B cell (primary cell): ENCODE measurements at regions of chr5 and their contacts with region 1.

Region 1: GRCh38 chr5:17216176-17216973 is 1.1 kb upstream of the BASP1 start:
- DNase-seq: peak; percentile 92
- ATAC-seq: peak; percentile 42
- H3K4me3 ChIP-seq: peak overlapping the region; percentile 55 to 87 (median 75)
- H3K4me3 Mint-ChIP-seq: peak overlapping the region; percentile 92
- H3K27ac ChIP-seq: peak overlapping the region; percentile 59 to 78
- H3K27ac Mint-ChIP-seq: peak overlapping the region; percentile 96
- H3K4me1 ChIP-seq: peaks cover 26 to 31% of the 10 kb centered on the region in 2 donors
- H3K4me1 Mint-ChIP-seq: peaks cover 41% of the 10 kb centered on the region
- H3K27me3 ChIP-seq: no peaks in the 10 kb centered on the region
- H3K27me3 Mint-ChIP-seq: no peaks in the 10 kb centered on the region
- CTCF ChIP-seq: peak; percentile 91

Region 2: DNA sequence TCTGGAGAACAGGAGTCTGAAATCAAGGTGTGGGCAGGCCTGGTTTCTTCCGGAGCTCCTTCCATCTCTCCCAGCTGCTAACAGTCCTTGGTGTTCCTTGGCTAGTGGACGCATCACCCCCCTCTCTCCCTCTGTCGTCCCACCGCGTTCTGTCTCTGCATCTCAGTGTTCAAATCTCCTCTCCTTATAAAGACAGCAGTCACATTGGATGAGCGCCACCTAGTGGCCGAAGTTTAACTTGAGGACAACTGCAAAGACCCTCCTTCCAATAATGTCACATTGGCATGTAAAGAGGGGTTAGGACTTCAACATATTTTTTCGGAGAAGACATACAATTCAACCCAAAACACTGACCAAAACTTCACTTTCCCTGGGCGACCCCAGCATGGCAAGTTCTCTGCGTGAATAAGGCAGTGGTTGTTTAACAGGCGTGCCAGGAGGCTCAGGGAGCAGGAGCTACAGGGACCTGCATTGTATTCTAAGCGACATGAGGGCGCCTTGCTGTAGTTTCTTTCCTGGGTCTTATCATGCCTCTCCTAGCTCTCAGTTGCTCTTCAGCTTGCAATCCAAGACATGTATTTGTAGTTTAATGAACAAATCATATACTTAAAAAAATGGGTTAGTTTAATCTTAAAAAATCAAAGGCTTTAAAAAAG is 26.9 kb before region 1 on chr5:
- CTCF ChIA-PET with region 1: interaction called, 20 read pairs
- POLR2A ChIA-PET with region 1: no interaction called
- intact Hi-C with region 1: no loop called
- DNase-seq: peak; percentile 74
- ATAC-seq: no peak
- H3K4me3 ChIP-seq: no peak overlapping the region
- H3K4me3 Mint-ChIP-seq: no peak overlapping the region
- H3K27ac ChIP-seq: no peak overlapping the region
- H3K27ac Mint-ChIP-seq: no peak overlapping the region
- H3K4me1 ChIP-seq: no peaks in the 10 kb centered on the region
- H3K4me1 Mint-ChIP-seq: peaks cover 4% of the 10 kb centered on the region
- H3K27me3 ChIP-seq: no peaks in the 10 kb centered on the region
- H3K27me3 Mint-ChIP-seq: peaks cover 6% of the 10 kb centered on the region
- CTCF ChIP-seq: peak; percentile 87

Region 3: DNA sequence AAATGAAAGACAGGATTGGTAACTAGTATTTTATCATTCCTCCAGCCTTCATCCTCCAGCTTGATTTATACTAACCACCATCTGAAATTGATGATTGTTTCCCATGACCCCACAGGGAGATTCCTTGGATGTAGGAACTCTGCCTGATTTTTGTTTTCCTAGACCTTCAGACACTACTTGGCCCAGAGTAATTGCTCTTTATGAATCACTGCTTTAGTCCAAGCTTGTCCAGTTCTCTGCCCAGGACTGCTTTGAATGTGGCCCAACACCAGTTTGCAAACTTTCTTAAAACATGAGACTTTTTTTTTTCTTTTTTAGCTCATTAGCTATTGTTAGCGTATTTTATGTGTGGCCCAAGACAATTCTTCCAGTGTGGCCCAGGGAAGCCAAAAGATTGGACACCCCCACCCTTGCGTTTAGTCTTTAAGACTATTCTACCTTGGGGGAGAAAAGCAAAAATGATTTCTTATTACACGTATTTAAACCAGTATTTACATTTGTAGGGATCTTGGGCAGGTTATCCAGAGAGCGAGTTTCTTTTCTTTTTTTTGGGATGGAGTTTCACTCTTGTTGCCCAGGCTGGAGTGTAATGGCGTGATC is 19.5 kb after region 1 on chr5:
- CTCF ChIA-PET with region 1: interaction called, 17 read pairs
- POLR2A ChIA-PET with region 1: interaction called, 3 read pairs
- intact Hi-C with region 1: no loop called
- DNase-seq: no peak
- ATAC-seq: no peak
- H3K4me3 ChIP-seq: no peak overlapping the region
- H3K4me3 Mint-ChIP-seq: no peak overlapping the region
- H3K27ac ChIP-seq: no peak overlapping the region
- H3K27ac Mint-ChIP-seq: peak overlapping the region; percentile 1
- H3K4me1 ChIP-seq: peaks cover 28 to 30% of the 10 kb centered on the region in 2 donors
- H3K4me1 Mint-ChIP-seq: peaks cover 73% of the 10 kb centered on the region
- H3K27me3 ChIP-seq: no peaks in the 10 kb centered on the region
- H3K27me3 Mint-ChIP-seq: no peaks in the 10 kb centered on the region
- CTCF ChIP-seq: no peak

Region 4: DNA sequence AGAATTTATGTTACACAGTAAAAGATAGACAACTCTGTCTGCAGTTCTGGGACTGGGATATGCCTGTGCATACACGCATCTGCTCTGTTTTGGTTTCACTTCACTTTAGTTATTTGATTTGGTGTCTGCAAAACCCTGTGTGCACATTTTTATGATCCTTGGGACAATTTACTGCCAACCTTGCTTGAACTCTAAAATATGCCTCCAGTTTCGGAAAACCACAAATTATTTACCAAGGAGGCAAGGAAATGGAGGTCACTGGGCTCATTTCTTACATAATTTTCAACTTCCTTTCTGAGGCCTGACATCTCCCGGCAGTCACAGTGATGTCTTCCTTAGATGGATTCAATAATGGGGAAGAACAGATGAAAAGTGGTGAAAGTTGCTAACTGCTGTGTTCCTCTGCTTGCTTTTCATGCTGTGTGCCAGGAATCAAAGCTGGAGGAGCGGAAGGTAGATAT is 220.4 kb after region 1 on chr5:
- CTCF ChIA-PET with region 1: interaction called, 15 read pairs
- POLR2A ChIA-PET with region 1: no interaction called
- intact Hi-C with region 1: no loop called
- DNase-seq: peak; percentile 51
- ATAC-seq: peak; percentile 63
- H3K4me3 ChIP-seq: peak overlapping the region; percentile 31 to 70 (median 48)
- H3K4me3 Mint-ChIP-seq: peak overlapping the region; percentile 85
- H3K27ac ChIP-seq: peak overlapping the region; percentile 42 to 74
- H3K27ac Mint-ChIP-seq: peak overlapping the region; percentile 81
- H3K4me1 ChIP-seq: peaks cover 14 to 17% of the 10 kb centered on the region in 2 donors
- H3K4me1 Mint-ChIP-seq: peaks cover 28% of the 10 kb centered on the region
- H3K27me3 ChIP-seq: no peaks in the 10 kb centered on the region
- H3K27me3 Mint-ChIP-seq: no peaks in the 10 kb centered on the region
- CTCF ChIP-seq: no peak

Region 5: GRCh38 chr5:17860694-17861310 is 644.4 kb after region 1 on chr5:
- CTCF ChIA-PET with region 1: no interaction called
- POLR2A ChIA-PET with region 1: no interaction called
- intact Hi-C with region 1: no loop called
- DNase-seq: no peak
- ATAC-seq: no peak
- H3K4me3 ChIP-seq: no peak overlapping the region
- H3K4me3 Mint-ChIP-seq: no peak overlapping the region
- H3K27ac ChIP-seq: no peak overlapping the region
- H3K27ac Mint-ChIP-seq: no peak overlapping the region
- H3K4me1 ChIP-seq: no peaks in the 10 kb centered on the region
- H3K4me1 Mint-ChIP-seq: no peaks in the 10 kb centered on the region
- H3K27me3 ChIP-seq: no peaks in the 10 kb centered on the region
- H3K27me3 Mint-ChIP-seq: peaks cover 4% of the 10 kb centered on the region
- CTCF ChIP-seq: no peak

Region 6: DNA sequence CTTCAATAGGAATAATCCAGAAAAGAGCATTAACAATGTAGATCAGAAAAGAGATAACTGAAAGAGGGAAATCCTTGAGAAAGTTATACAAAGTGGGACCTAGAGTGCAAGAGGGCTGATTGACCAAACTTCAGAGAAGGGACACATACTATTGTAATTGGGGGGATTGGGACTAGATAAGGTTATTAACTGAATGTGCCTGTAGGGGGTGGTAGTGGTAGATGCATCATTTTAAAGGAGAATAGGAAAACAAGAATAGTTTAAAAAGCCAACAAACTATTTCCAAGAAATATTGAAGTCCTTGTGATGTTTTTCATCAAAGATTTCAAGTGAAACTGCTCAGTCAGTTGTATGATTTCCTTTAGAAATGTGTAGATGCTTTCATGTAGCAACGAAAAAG is 886.4 kb after region 1 on chr5:
- CTCF ChIA-PET with region 1: no interaction called
- POLR2A ChIA-PET with region 1: no interaction called
- intact Hi-C with region 1: loop called (anchors 5 kb)
- DNase-seq: no peak
- ATAC-seq: no peak
- H3K4me3 ChIP-seq: no peak overlapping the region
- H3K4me3 Mint-ChIP-seq: no peak overlapping the region
- H3K27ac ChIP-seq: no peak overlapping the region
- H3K27ac Mint-ChIP-seq: no peak overlapping the region
- H3K4me1 ChIP-seq: no peaks in the 10 kb centered on the region
- H3K4me1 Mint-ChIP-seq: no peaks in the 10 kb centered on the region
- H3K27me3 ChIP-seq: no peaks in the 10 kb centered on the region
- H3K27me3 Mint-ChIP-seq: no peaks in the 10 kb centered on the region
- CTCF ChIP-seq: no peak

Region 7: GRCh38 chr5:18305297-18305924 is 1089.0 kb after region 1 on chr5:
- CTCF ChIA-PET with region 1: interaction called, 135 read pairs
- POLR2A ChIA-PET with region 1: interaction called, 7 read pairs
- intact Hi-C with region 1: no loop called
- DNase-seq: peak; percentile 53
- ATAC-seq: peak; percentile 67
- H3K4me3 ChIP-seq: no peak overlapping the region
- H3K4me3 Mint-ChIP-seq: no peak overlapping the region
- H3K27ac ChIP-seq: no peak overlapping the region
- H3K27ac Mint-ChIP-seq: no peak overlapping the region
- H3K4me1 ChIP-seq: no peaks in the 10 kb centered on the region
- H3K4me1 Mint-ChIP-seq: no peaks in the 10 kb centered on the region
- H3K27me3 ChIP-seq: peaks cover 0 to 2% (median 0%) of the 10 kb centered on the region in 4 experiments
- H3K27me3 Mint-ChIP-seq: no peaks in the 10 kb centered on the region
- CTCF ChIP-seq: peak; percentile 85

Region 8: DNA sequence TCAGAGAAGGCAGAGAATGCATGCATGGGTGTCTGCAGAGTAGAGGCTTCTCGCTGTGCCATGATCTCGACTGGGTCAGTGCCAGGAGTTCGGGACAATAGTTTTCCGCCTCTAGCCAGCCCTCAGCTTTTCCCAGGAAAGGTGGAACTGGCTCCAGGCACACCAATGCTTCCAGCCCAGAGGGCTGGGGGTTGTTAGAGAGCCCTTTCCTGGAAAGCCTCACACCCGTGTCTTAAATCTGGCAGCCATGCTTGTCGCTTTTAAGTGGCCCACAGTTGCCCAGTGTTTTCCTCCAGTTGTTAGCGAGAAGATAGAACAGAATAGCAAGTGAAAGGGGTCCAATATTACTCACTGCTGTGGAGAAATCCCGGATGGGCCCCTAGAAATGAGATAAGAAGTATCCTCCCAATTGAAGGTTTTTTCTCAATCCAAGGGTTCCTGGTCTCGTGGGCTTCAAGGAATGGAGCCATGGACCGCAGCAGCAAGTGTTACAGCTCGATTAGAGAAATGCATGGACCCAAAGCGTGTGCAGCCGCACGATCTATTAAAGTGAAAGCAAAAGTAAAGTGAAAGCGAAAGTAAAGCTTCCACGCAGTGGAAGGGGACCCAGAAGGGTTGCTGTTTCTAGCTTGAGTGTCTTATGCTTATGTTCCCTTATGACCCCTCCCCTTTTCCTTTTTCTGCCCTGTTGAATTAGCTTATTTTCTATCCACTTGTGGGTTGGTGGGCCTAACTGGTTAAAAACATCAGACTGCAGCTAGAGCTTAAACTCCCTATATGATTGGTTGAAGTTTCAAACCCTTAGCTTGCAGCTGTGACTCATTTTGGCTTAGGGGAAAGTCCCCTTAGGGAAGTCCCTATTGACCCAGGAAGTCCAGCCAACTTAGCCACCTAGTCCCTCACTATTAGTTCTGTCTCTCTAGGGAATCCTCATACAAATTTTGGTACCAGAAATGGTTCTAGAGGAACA is 1529.6 kb after region 1 on chr5:
- CTCF ChIA-PET with region 1: interaction called, 3 read pairs
- POLR2A ChIA-PET with region 1: no interaction called
- intact Hi-C with region 1: loop called (anchors 5 kb)
- DNase-seq: peak; percentile 87
- ATAC-seq: peak; percentile 84
- H3K4me3 ChIP-seq: peak overlapping the region; percentile 52 to 100 (median 85)
- H3K4me3 Mint-ChIP-seq: peak overlapping the region; percentile 90
- H3K27ac ChIP-seq: peak overlapping the region; percentile 85 to 94
- H3K27ac Mint-ChIP-seq: peak overlapping the region; percentile 94
- H3K4me1 ChIP-seq: peaks cover 45 to 46% of the 10 kb centered on the region in 2 donors
- H3K4me1 Mint-ChIP-seq: peaks cover 58% of the 10 kb centered on the region
- H3K27me3 ChIP-seq: no peaks in the 10 kb centered on the region
- H3K27me3 Mint-ChIP-seq: no peaks in the 10 kb centered on the region
- CTCF ChIP-seq: no peak